Calu3 (cell line): ENCODE measurements at regions of chr11 and their contacts with region 1.

Region 1: DNA sequence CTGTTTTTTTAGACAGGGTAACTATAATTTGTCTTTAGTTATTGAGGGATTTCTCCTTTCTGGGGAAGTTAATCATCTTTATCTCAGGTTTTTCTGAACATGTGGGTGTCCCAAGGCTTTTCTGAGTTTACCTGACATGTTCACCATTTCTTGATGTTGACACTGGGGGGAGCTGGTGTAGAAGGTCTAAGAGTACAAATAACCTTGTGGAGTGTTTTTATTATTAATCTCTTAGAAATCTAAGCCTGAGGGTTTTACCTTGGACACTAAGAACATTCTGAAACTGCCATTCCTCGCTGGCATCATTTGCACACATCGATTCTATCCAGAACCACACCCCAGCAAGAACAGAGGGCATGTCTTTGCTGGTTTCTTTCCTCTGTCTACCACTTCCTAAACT is 15.6 kb upstream of the C11orf91 start:
- DNase-seq: no peak
- H3K4me3 Mint-ChIP-seq: peak overlapping the region; percentile 37
- H3K27ac Mint-ChIP-seq: peak overlapping the region; percentile 78
- H3K4me1 Mint-ChIP-seq: peaks cover 58% of the 10 kb centered on the region
- H3K27me3 Mint-ChIP-seq: no peaks in the 10 kb centered on the region
- CTCF ChIP-seq: peak; percentile 17

Region 2: DNA sequence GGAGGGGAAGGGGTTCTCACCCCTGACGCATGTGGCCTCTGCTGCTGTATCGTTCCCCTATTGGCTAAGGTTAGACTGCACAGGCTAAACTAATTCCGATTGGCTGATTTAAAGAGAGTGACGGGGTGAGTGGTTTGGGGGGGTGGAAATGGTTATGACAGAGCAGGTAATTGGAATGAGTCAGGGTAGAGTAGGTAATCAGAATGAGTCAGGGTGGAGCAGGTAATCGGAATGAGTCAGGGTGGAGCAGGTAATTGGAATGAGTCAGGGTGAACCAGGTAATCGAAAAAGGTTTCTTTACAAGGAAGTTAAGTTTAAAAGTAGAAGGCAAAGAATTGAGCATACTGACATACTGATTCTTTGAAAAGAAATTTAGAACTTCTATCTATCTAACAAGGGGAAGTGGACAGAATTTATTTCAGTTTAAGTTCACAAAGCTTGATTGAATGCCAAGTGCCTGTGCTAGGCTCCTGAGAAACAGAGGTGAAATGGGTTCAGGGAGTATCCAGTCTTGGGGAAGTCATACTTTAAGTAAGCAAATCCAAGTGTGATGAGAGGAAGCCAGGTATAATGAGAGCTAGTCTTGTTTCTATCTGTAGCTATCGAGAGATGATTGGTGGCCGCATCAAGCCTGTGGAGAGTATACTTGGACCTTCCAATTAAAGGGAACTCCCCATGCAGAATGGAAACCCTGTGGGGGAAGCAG is 73.6 kb before region 1 on chr11:
- CTCF ChIA-PET with region 1: no interaction called
- intact Hi-C with region 1: no loop called
- DNase-seq: peak; percentile 25
- H3K4me3 Mint-ChIP-seq: no peak overlapping the region
- H3K27ac Mint-ChIP-seq: peak overlapping the region; percentile 45
- H3K4me1 Mint-ChIP-seq: peaks cover 10% of the 10 kb centered on the region
- H3K27me3 Mint-ChIP-seq: no peaks in the 10 kb centered on the region
- CTCF ChIP-seq: no peak

Region 3: DNA sequence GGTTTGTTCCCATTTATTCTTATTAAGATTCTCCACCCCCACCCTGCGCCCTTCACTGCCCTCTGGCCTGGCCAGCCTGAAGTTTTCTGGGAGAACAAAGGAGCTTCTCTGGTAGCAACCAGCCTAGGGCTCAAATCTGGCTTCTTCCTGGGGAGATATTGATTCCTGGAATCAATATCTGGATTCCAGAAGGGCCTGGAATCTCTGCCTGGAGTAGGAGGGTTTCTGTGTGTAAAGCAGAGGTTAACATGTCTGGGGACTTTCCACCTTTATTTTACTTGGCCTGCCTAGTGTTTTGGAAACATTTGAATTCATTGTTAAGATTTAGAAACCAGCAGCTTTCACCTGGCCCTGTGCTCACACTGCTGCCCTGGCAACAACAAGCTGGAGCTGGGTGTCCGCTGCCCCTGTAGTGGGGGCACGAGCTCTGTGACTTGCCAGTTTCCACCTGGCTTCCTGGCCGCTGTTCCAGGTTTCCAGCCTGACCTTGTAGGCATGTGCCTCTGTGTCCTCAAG is 21.1 kb before region 1 on chr11:
- CTCF ChIA-PET with region 1: interaction called, 13 read pairs
- intact Hi-C with region 1: no loop called
- DNase-seq: peak; percentile 75
- H3K4me3 Mint-ChIP-seq: peak overlapping the region; percentile 76
- H3K27ac Mint-ChIP-seq: peak overlapping the region; percentile 92
- H3K4me1 Mint-ChIP-seq: peaks cover 93% of the 10 kb centered on the region
- H3K27me3 Mint-ChIP-seq: no peaks in the 10 kb centered on the region
- CTCF ChIP-seq: no peak

Region 4: DNA sequence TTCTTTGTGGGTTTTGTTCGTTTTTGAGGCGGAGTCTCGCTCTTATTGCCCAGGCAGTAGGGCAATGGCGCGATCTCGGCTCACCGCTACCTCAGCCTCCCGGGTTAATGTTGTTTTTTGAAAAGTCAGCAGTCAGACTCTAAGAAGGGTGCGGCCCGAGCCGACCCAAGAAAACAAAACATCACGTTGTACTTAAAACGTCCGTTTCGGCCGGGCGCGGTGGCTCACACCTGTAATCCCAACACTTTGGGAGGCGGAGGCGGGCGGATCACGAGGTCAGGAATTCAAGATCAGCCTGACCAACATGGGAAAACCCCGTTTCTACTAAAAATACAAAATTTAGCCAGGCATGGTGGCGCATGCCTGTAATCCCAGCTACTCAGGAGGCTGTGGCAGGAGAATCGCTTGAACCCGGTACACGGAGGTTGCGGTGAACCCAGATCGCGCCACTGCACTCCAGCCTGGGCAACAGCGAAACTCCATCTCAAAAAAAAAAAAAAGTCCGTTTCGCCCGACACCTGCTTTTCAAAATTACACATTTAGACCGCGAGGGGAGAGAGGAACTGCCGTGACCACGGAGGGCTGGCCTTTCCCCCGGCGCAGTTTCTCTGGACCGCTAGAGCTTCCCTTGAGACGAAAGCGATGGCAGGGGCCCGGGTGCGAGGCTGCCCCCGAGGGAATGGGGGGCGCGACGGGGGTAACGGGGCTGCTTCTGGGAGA is 19.4 kb after region 1 on chr11:
- CTCF ChIA-PET with region 1: interaction called, 15 read pairs
- intact Hi-C with region 1: loop called (anchors 2 kb)
- DNase-seq: no peak
- H3K4me3 Mint-ChIP-seq: peak overlapping the region; percentile 77
- H3K27ac Mint-ChIP-seq: peak overlapping the region; percentile 58
- H3K4me1 Mint-ChIP-seq: peaks cover 50% of the 10 kb centered on the region
- H3K27me3 Mint-ChIP-seq: no peaks in the 10 kb centered on the region
- CTCF ChIP-seq: no peak